ENCODE measurements at regions of chr7 and their contacts with region 1.

Region 1: DNA sequence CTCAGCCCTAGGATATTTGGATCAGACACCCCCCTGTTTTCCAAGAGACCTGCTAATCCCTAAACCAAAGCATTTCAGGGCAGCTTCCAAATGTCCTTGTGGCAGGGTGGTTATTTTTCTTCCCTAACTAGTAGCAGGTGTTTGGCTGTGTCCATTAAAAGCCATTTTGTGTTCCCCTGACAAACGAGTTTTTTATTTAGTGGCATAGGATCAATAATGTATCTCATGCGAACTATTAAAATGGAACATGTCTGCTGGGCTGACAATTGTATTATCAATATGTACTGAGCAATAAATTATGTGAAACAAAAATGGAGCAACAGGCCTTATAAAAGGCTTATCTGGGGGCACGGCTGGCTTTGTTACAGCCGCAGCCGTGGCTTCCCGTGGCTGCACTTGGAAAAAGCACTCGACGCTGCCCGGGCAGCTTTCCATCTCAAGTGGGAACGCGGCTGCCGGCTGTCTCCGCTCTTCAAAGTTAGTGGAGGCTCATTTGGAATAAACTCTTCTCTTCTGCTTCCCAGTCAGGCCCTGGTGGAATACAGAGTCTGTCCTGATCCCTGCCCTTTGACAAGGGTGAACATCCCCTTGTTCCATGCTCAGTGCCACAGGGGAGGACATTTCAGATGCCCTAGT is 554.3 kb downstream of the TYW1 start:
- DNase-seq: no peak
- H3K4me3 ChIP-seq: no peak overlapping the region
- H3K4me3 Mint-ChIP-seq: no peak overlapping the region
- H3K27ac Mint-ChIP-seq: no peak overlapping the region
- H3K4me1 ChIP-seq: no peaks in the 10 kb centered on the region
- H3K4me1 Mint-ChIP-seq: no peaks in the 10 kb centered on the region
- H3K27me3 ChIP-seq: no peaks in the 10 kb centered on the region
- H3K27me3 Mint-ChIP-seq: peaks cover under 1% of the 10 kb centered on the region
- CTCF ChIP-seq: no peak

Region 2: DNA sequence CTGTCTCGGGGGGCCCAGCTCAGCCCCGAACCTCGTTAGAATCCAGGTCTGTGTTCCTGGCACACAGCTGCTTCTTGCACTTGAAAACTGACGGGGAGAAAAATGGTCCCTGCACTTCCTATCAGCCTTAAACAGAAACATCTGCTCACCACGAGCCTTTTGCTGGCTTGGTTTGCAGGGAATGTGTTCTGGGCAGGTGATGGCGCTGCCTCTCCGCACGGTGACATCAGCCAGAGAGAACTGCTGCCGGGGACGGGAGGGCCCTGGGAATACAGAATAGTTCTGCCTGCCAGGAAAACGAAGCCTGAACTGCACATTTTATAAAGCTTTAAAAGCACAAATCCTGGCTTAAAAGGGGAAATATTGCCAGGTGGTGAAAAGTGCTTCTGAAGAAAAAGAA is 68.3 kb after region 1 on chr7:
- CTCF ChIA-PET with region 1: no interaction called
- POLR2A ChIA-PET with region 1: no interaction called
- intact Hi-C with region 1: loop called (anchors 10 kb)
- DNase-seq: no peak
- H3K4me3 ChIP-seq: no peak overlapping the region
- H3K4me3 Mint-ChIP-seq: no peak overlapping the region
- H3K27ac Mint-ChIP-seq: no peak overlapping the region
- H3K4me1 ChIP-seq: no peaks in the 10 kb centered on the region
- H3K4me1 Mint-ChIP-seq: no peaks in the 10 kb centered on the region
- H3K27me3 ChIP-seq: no peaks in the 10 kb centered on the region
- H3K27me3 Mint-ChIP-seq: peaks cover 33% of the 10 kb centered on the region
- CTCF ChIP-seq: no peak